ENCODE measurements at regions of chr3 and their contacts with region 1.

Region 1: GRCh38 chr3:68876112-68876713 is 56.1 kb downstream of the TAFA4 start:
- DNase-seq: peak in 7 of 9 donors; percentile 30 to 63 (median 51)
- ATAC-seq: peak; percentile 69
- H3K4me3 ChIP-seq: no peak overlapping the region
- H3K4me3 Mint-ChIP-seq: no peak overlapping the region
- H3K27ac ChIP-seq: no peak overlapping the region
- H3K27ac Mint-ChIP-seq: no peak overlapping the region
- H3K4me1 ChIP-seq: no peaks in the 10 kb centered on the region
- H3K4me1 Mint-ChIP-seq: no peaks in the 10 kb centered on the region
- H3K27me3 ChIP-seq: no peaks in the 10 kb centered on the region
- H3K27me3 Mint-ChIP-seq: peaks cover 5 to 28% (median 25%) of the 10 kb centered on the region in 5 donors

Region 2: GRCh38 chr3:66938338-66938963 is 1937.8 kb before region 1 on chr3:
- CTCF ChIA-PET with region 1: interaction called, 8 read pairs
- POLR2A ChIA-PET with region 1: no interaction called
- intact Hi-C with region 1: loop called (anchors 1 to 5 kb)
- DNase-seq: peak in 7 of 9 donors; percentile 10 to 46 (median 38)
- ATAC-seq: peak; percentile 54
- H3K4me3 ChIP-seq: no peak overlapping the region
- H3K4me3 Mint-ChIP-seq: no peak overlapping the region
- H3K27ac ChIP-seq: no peak overlapping the region
- H3K27ac Mint-ChIP-seq: no peak overlapping the region
- H3K4me1 ChIP-seq: no peaks in the 10 kb centered on the region
- H3K4me1 Mint-ChIP-seq: no peaks in the 10 kb centered on the region
- H3K27me3 ChIP-seq: no peaks in the 10 kb centered on the region
- H3K27me3 Mint-ChIP-seq: peaks cover 7 to 35% (median 22%) of the 10 kb centered on the region in 5 donors

Region 3: DNA sequence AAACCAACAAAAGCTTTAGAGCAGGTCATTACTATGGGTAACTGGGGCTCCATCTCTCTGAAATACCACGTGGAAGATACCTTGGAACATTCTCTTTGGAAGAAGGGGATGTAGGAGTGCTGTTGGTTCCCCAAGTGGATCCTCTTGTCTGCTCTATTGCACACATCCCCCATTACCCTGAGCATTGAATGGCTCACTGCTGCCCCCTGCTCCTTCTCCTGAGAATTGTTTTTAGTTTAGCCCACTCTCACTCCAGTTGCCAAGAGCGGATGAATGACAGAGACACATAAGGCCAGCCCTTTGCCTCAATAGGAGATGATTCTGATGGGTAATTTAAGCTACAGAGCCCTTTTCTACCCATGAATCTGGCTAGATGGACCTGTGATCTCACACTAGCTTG is 1086.2 kb before region 1 on chr3:
- CTCF ChIA-PET with region 1: no interaction called
- POLR2A ChIA-PET with region 1: no interaction called
- intact Hi-C with region 1: loop called in 1 of 2 experiments (anchors 1 kb)
- DNase-seq: peak; percentile 17 to 75 (median 61)
- ATAC-seq: peak; percentile 78
- H3K4me3 ChIP-seq: no peak overlapping the region
- H3K4me3 Mint-ChIP-seq: peak overlapping the region in 3 of 10 donors; percentile 3 to 19 (median 19)
- H3K27ac ChIP-seq: no peak overlapping the region
- H3K27ac Mint-ChIP-seq: peak overlapping the region in 1 of 9 donors; percentile 3
- H3K4me1 ChIP-seq: peaks cover 0 to 9% of the 10 kb centered on the region in 2 donors
- H3K4me1 Mint-ChIP-seq: peaks cover 6 to 23% (median 15%) of the 10 kb centered on the region in 7 donors
- H3K27me3 ChIP-seq: no peaks in the 10 kb centered on the region
- H3K27me3 Mint-ChIP-seq: peaks cover 0 to 7% (median 0%) of the 10 kb centered on the region in 5 donors

Region 4: DNA sequence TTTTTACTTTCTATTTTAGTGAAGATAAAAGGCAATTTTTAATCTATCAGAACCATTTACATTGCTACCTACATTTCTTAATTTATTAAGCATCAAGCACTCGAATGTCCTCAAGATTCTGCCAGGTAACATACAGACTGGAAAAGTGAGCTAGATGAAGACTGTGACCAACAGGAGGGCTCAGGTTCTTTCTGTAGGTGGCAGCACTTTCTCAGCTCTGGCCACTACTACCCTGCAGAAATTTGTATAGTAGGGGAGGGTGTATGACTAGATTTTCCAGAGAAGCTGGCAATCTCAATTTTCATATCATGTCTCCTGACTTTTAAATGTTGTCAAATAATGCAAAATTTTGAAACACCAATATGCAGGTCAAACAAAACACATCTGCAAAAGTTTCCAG is 1056.8 kb before region 1 on chr3:
- CTCF ChIA-PET with region 1: interaction called, 7 read pairs
- POLR2A ChIA-PET with region 1: no interaction called
- intact Hi-C with region 1: loop called (anchors 1 to 2 kb)
- DNase-seq: peak in 5 of 9 donors; percentile 10 to 27 (median 21)
- ATAC-seq: no peak
- H3K4me3 ChIP-seq: no peak overlapping the region
- H3K4me3 Mint-ChIP-seq: no peak overlapping the region
- H3K27ac ChIP-seq: no peak overlapping the region
- H3K27ac Mint-ChIP-seq: peak overlapping the region in 1 of 9 donors; percentile 3
- H3K4me1 ChIP-seq: no peaks in the 10 kb centered on the region
- H3K4me1 Mint-ChIP-seq: peaks cover 0 to 10% (median 0%) of the 10 kb centered on the region in 7 donors
- H3K27me3 ChIP-seq: no peaks in the 10 kb centered on the region
- H3K27me3 Mint-ChIP-seq: no peaks in the 10 kb centered on the region

Region 5: DNA sequence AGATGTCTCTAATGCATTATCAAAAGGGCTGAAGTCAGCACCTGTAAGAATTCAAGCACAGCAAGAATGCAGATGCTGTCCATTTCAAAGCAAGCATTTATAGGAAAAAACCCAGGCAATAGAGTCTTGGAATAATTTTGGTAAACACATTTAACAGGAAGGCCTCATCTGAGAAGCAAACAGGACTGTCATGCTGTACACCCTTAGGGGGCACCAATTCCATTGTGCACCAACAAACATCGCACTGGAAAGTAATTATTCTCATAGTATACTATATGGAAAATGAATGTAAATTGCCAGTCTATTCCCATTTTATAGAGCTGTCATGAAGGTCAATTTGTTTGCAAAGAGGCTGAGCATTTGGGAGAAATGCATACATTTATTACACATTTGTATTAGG is 974.5 kb before region 1 on chr3:
- CTCF ChIA-PET with region 1: interaction called, 3 read pairs
- POLR2A ChIA-PET with region 1: no interaction called
- intact Hi-C with region 1: loop called in 1 of 2 experiments (anchors 1 kb)
- DNase-seq: peak in 5 of 9 donors; percentile 17 to 31 (median 24)
- ATAC-seq: peak; percentile 31
- H3K4me3 ChIP-seq: no peak overlapping the region
- H3K4me3 Mint-ChIP-seq: no peak overlapping the region
- H3K27ac ChIP-seq: no peak overlapping the region
- H3K27ac Mint-ChIP-seq: no peak overlapping the region
- H3K4me1 ChIP-seq: peaks cover 0 to under 1% of the 10 kb centered on the region in 2 donors
- H3K4me1 Mint-ChIP-seq: peaks cover 0 to 19% (median 13%) of the 10 kb centered on the region in 7 donors
- H3K27me3 ChIP-seq: no peaks in the 10 kb centered on the region
- H3K27me3 Mint-ChIP-seq: no peaks in the 10 kb centered on the region

Region 6: DNA sequence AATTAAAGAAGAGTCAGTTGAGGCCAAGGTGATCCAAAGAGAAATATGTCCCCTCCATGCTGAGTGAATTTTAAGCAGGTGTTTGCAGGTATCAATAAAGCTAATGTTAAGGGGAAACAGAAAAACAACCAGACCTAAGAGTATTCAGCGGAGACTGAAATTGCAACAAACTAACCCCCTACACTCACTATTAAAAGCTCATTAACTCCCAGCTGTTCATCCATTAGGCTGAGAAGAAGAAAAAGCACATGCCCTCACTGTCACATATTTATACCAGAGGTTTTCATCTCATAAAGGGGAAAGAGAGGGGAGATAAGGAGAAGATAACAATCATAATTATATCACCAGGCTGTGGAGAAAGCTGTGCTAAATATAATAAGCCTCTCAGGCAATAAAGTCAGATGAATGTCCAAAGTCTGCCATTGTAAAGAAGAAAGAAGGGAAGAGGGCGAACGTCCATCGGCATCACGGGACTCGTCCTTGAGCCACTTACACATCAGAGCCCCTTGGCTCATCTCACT is 89.0 kb before region 1 on chr3:
- CTCF ChIA-PET with region 1: no interaction called
- POLR2A ChIA-PET with region 1: no interaction called
- intact Hi-C with region 1: no loop called
- DNase-seq: no peak
- ATAC-seq: no peak
- H3K4me3 ChIP-seq: no peak overlapping the region
- H3K4me3 Mint-ChIP-seq: no peak overlapping the region
- H3K27ac ChIP-seq: no peak overlapping the region
- H3K27ac Mint-ChIP-seq: no peak overlapping the region
- H3K4me1 ChIP-seq: no peaks in the 10 kb centered on the region
- H3K4me1 Mint-ChIP-seq: no peaks in the 10 kb centered on the region
- H3K27me3 ChIP-seq: no peaks in the 10 kb centered on the region
- H3K27me3 Mint-ChIP-seq: peaks cover 0 to 13% (median 4%) of the 10 kb centered on the region in 5 donors

Measured in naive thymus-derived CD4-positive, alpha-beta T cell (primary cell).